RWPE1 (cell line): ENCODE measurements at regions of chrX and their contacts with region 1.

Region 1: GRCh38 chrX:123962786-123963373 is 1.4 kb downstream of the STAG2 start:
- DNase-seq: peak; percentile 84
- H3K27ac ChIP-seq: peak overlapping the region; percentile 95
- CTCF ChIP-seq: no peak

Region 2: GRCh38 chrX:123943488-123943887 is 19.4 kb before region 1 on chrX:
- CTCF ChIA-PET with region 1: no interaction called
- POLR2A ChIA-PET with region 1: no interaction called
- DNase-seq: no peak
- H3K27ac ChIP-seq: no peak overlapping the region
- CTCF ChIP-seq: no peak

Region 3: DNA sequence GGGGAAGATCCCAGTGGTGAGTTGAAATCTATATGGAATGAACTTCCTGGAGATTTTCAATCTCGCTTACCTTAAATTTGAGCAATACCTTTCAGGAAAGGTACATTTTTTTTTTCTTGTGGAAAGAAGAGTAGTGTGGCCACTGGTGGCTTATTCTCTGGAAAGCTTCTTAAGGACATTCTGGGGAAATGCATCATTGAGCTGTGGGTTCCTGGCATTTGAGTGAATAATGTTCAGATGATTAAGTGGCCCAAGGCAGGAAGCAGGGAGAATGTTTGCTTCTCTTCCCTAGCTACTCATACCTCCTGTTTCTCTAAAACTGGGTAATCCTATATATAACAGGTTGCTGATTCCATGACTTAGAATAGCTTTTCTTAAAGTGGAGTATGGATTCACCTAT is 30.4 kb after region 1 on chrX:
- CTCF ChIA-PET with region 1: interaction called, 10 read pairs
- POLR2A ChIA-PET with region 1: no interaction called
- DNase-seq: peak; percentile 8
- H3K27ac ChIP-seq: no peak overlapping the region
- CTCF ChIP-seq: no peak